Heart right ventricle (tissue), 16 donors: ENCODE measurements at regions of chr2 and their contacts with region 1.

Region 1: GRCh38 chr2:28594289-28595108 is 98.6 kb downstream of the PLB1 start:
- DNase-seq: peak; percentile 86 to 89
- ATAC-seq: peak; percentile 74 to 93 (median 86)
- H3K4me3 ChIP-seq: peak overlapping the region in 6 of 10 donors; percentile 3 to 30 (median 28)
- H3K27ac ChIP-seq: peak overlapping the region; percentile 53 to 95 (median 86)
- H3K4me1 ChIP-seq: peaks cover 0 to 44% (median 20%) of the 10 kb centered on the region in 9 donors
- H3K27me3 ChIP-seq: no peaks in the 10 kb centered on the region
- CTCF ChIP-seq: peak; percentile 68 to 93 (median 86)

Region 2: DNA sequence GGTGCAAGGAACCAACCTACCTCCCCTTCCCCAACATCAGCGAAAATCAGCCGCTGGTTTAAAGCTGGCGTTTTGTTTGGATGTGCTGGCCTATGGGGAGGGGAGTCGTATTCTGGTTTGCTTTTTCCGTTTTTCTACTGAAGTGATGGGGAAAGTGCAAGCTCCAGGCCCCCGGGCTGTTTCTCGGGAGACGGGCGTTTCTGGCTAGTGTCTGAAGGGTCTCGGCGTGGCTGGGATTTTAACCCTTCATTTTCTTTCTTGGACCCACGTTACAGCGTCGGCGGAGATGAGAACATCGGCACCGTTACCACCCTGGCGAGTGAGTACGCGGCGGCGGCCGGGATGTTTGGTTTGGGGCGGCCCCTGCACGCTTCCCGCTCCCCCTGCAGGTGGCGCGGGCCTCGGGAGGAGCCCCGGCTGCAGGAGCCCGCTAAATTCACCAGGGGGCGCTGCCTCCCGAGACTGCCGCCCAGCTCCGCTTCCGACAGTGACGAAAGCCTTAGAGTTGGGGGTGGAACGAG is 27.9 kb before region 1 on chr2:
- intact Hi-C with region 1: loop called in 1 of 10 experiments (anchors 1 kb)
- DNase-seq: peak; percentile 83 to 88
- ATAC-seq: peak; percentile 92 to 98 (median 95)
- H3K4me3 ChIP-seq: peak overlapping the region; percentile 36 to 82 (median 61)
- H3K27ac ChIP-seq: peak overlapping the region in 9 of 10 donors; percentile 34 to 81 (median 61)
- H3K4me1 ChIP-seq: peaks cover 0 to 13% (median 4%) of the 10 kb centered on the region in 9 donors
- H3K27me3 ChIP-seq: no peaks in the 10 kb centered on the region
- CTCF ChIP-seq: peak; percentile 98 to 100 (median 100)

Region 3: GRCh38 chr2:28661589-28662001 is 67.1 kb after region 1 on chr2:
- intact Hi-C with region 1: loop called in 1 of 10 experiments (anchors 10 kb)
- DNase-seq: peak; percentile 55 to 84
- ATAC-seq: peak; percentile 68 to 86 (median 82)
- H3K4me3 ChIP-seq: no peak overlapping the region
- H3K27ac ChIP-seq: peak overlapping the region; percentile 18 to 82 (median 64)
- H3K4me1 ChIP-seq: peaks cover 11 to 64% (median 57%) of the 10 kb centered on the region in 9 donors
- H3K27me3 ChIP-seq: no peaks in the 10 kb centered on the region
- CTCF ChIP-seq: peak in 1 of 9 donors; percentile 15

Region 4: DNA sequence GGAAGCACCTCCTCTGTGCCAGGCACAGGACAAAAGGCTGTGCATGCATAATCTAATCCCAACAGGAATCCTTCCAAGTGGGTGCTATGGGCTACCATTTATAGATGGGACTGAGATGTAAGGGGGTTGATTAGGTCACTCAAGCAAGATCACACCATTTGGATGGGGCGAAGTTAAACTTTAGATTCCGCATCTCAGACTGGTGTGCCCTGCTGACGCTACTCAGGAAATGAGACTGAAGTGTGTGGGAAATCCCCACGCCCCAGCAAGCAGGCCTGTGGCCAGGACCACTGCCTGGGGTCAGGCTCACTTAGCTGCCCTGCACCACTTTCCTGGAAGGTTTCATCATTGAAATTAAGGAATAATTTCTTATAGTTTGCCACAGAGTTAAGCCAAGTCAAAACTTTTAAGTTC is 86.7 kb after region 1 on chr2:
- intact Hi-C with region 1: loop called in 1 of 10 experiments (anchors 10 kb)
- DNase-seq: no peak
- ATAC-seq: peak in 3 of 8 donors; percentile 23 to 48 (median 38)
- H3K4me3 ChIP-seq: no peak overlapping the region
- H3K27ac ChIP-seq: peak overlapping the region in 8 of 10 donors; percentile 34 to 84 (median 76)
- H3K4me1 ChIP-seq: peaks cover 5 to 79% (median 61%) of the 10 kb centered on the region in 9 donors
- H3K27me3 ChIP-seq: no peaks in the 10 kb centered on the region
- CTCF ChIP-seq: no peak

Region 5: DNA sequence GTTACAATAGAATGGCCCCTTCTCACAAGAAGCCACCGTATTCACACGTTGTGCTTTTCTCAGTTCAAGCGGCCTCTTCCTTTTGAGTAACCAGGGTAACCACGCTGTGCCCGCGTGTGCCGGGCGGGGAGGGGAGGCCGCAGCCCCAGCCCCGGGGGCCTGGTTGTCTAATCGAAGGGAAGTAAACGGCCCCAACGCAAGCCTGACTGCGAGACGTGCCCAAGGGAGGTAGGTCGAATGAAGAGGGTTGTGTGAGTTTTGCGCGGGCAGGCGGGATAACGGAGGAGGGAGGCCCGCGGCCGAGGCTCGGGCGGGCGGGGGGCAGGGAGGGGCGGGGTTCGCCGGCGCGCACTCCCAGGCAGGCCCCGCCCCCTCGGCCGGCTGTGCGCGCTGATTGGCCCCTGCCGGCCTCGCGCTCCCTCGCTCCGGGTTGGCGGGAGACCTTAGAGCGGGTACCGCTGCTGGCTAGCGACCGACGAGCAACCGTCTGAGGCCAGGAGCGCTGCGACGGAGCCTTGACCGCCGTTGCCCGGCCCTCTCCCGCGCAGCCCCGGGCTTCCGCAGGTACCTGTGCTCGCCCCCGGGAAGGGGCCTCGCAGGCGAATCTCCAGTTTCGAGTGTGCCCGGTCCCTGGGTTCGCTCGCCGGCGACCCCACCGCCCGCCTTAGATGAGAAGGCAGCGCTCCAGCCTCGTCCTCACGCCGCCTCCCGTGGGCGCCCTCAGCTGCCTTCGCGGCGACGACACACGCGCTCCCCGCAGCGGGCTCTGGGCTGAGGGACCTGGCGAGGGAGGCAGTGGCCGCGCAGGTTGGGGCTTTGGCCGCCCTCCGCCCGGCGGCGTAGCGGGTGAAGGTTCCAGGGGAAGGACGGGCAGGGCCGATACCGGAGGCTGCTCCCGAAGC is 216.1 kb after region 1 on chr2 and contains the start of gene SPDYA:
- intact Hi-C with region 1: loop called in 1 of 10 experiments (anchors 10 kb)
- DNase-seq: peak; percentile 57 to 76
- ATAC-seq: peak; percentile 90 to 96 (median 94)
- H3K4me3 ChIP-seq: peak within 1 kb of the TSS; percentile 22 to 64 (median 58)
- H3K27ac ChIP-seq: no peak within 1 kb of the TSS
- H3K4me1 ChIP-seq: peaks cover 0 to 21% (median 12%) of the 10 kb centered on the region in 9 donors
- H3K27me3 ChIP-seq: peaks cover 0 to 6% (median 0%) of the 10 kb centered on the region in 7 donors
- CTCF ChIP-seq: peak in 3 of 9 donors; percentile 16 to 22 (median 19)
- total RNA-seq, gene SPDYA: 0.16 to 0.46 (median 0.28) TPM

Region 6: GRCh38 chr2:29042561-29043075 is 448.1 kb after region 1 on chr2:
- intact Hi-C with region 1: no loop called
- DNase-seq: no peak
- ATAC-seq: peak; percentile 18 to 76 (median 61)
- H3K4me3 ChIP-seq: no peak overlapping the region
- H3K27ac ChIP-seq: no peak overlapping the region
- H3K4me1 ChIP-seq: peaks cover 0 to 28% (median 8%) of the 10 kb centered on the region in 9 donors
- H3K27me3 ChIP-seq: no peaks in the 10 kb centered on the region
- CTCF ChIP-seq: no peak